Heart right ventricle (tissue), 16 donors: ENCODE measurements at regions of chr11 and their contacts with region 1.

Region 1: DNA sequence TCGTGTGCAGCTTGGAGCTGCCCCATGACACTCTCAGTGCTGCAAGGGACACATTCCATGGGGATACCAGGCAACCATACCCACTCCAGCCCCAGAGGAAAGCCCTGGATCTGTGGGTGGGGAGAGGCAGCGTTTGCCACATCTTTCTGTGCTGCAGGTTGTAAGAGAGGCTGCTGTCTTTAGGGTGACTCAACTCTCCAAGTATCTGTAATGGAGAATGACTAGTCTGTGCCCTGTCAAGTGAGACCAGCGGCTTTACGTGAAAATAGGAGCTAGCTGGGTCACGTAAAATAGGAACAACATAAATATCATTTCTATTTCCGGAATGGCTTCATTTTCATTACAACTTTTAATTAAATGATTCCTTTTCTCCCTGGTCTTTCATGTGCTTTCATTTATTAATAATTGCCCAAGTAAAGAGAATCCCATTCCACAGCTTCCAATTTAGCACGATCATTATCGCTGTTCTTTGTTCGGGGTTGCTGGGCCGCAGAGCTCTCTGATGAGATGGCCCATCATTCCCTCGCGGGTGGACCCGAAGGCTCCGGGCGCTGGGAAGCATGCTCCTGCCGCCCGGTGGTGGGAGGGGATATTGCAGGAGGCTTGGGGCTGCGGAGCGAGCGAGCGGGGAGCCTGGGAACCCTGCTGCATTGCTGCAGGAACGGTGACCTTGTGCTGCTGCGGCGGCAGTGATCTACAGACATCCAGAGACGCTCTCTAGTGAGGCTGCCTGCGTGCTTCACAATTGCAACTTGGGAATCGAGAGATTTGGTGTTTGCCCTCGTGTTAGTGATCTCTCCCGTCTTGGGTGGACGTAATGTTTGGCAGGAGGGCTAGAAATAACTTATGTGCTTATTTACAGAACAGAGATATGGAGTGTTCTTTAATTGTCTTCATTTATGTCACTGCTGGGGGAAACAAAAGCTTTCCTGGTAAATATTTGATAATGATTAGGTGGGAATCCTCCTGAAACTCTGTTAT is 10.6 kb downstream of the SLC6A5 start:
- DNase-seq: peak; percentile 64 to 78
- ATAC-seq: peak; percentile 88 to 96 (median 94)
- H3K4me3 ChIP-seq: peak overlapping the region in 2 of 10 donors; percentile 3 to 23
- H3K27ac ChIP-seq: no peak overlapping the region
- H3K4me1 ChIP-seq: peaks cover 0 to 8% (median 0%) of the 10 kb centered on the region in 9 donors
- H3K27me3 ChIP-seq: peaks cover 10 to 90% (median 78%) of the 10 kb centered on the region in 7 donors
- CTCF ChIP-seq: peak; percentile 70 to 98 (median 95)

Region 2: GRCh38 chr11:20387241-20388095 is 222.5 kb before region 1 on chr11 and contains the start of gene PRMT3:
- intact Hi-C with region 1: loop called in 6 of 10 experiments (anchors 2 to 10 kb)
- DNase-seq: peak; percentile 95 to 97
- ATAC-seq: peak; percentile 97 to 99 (median 98)
- H3K4me3 ChIP-seq: peak within 1 kb of the TSS; percentile 61 to 98 (median 79)
- H3K27ac ChIP-seq: peak within 1 kb of the TSS; percentile 85 to 98 (median 93)
- H3K4me1 ChIP-seq: peaks cover 0 to 24% (median 18%) of the 10 kb centered on the region in 9 donors
- H3K27me3 ChIP-seq: no peaks in the 10 kb centered on the region
- CTCF ChIP-seq: peak in 8 of 9 donors; percentile 4 to 99 (median 95)
- total RNA-seq, gene PRMT3: 9.2 to 16.3 (median 11.7) TPM

Region 3: GRCh38 chr11:20397281-20397680 is 212.7 kb before region 1 on chr11:
- intact Hi-C with region 1: loop called in 6 of 10 experiments (anchors 1 to 10 kb)
- DNase-seq: no peak
- ATAC-seq: peak in 1 of 8 donors; percentile 58
- H3K4me3 ChIP-seq: no peak overlapping the region
- H3K27ac ChIP-seq: no peak overlapping the region
- H3K4me1 ChIP-seq: no peaks in the 10 kb centered on the region
- H3K27me3 ChIP-seq: no peaks in the 10 kb centered on the region
- CTCF ChIP-seq: peak in 8 of 9 donors; percentile 14 to 60 (median 52)

Region 4: DNA sequence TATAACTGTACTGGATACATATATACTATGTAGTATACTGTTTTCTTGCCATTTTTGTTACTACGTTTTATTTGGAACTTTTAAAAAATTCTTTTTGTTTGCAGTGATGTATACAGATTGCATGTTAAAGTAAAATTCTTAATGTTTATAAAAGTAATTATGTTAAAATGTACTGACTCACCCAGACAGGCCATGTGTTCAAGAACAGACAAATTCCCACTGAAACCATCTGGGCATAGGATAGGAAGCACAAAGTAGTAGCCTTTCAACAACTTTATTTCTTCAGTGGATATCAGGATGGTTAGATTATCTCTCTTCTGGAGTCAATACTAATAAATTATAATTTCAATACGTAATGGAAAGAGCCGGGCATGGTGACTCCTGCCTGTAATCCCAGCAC is 202.7 kb before region 1 on chr11:
- intact Hi-C with region 1: loop called in 1 of 10 experiments (anchors 10 kb)
- DNase-seq: no peak
- ATAC-seq: no peak
- H3K4me3 ChIP-seq: no peak overlapping the region
- H3K27ac ChIP-seq: no peak overlapping the region
- H3K4me1 ChIP-seq: no peaks in the 10 kb centered on the region
- H3K27me3 ChIP-seq: no peaks in the 10 kb centered on the region
- CTCF ChIP-seq: no peak

Region 5: DNA sequence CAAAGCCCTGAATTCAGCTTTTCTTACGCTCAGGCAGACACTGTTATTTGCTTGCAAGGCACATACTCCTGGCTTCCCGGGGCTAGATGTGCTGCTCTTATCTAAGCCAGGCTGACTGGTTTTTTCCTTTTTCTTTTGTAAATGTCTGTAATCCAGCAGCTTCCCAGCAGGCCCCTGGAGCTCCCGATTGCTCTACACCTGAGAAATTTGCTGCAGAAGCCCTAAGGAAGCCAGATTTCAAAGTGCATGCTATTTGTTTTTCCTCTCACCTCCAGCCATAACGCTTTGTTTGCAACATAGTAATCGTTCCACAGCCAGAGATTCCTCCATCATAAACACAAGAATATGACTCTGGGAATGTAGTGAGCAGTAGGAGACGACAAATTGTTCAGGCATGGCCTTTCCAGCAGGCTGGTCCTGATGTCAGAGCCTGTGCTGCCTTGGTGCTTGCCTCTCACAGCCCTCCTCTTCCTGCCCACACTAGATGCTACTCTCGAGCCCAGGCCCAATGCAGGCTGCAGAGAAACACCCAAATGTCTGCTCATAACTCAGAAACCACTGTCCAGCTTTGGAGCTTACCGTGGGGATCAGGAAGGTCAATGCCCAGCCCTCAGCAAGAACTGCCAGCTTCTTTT is 65.3 kb before region 1 on chr11:
- intact Hi-C with region 1: no loop called
- DNase-seq: no peak
- ATAC-seq: no peak
- H3K4me3 ChIP-seq: no peak overlapping the region
- H3K27ac ChIP-seq: no peak overlapping the region
- H3K4me1 ChIP-seq: no peaks in the 10 kb centered on the region
- H3K27me3 ChIP-seq: peaks cover 0 to 5% (median 0%) of the 10 kb centered on the region in 7 donors
- CTCF ChIP-seq: no peak

Region 6: GRCh38 chr11:20563866-20564265 is 46.2 kb before region 1 on chr11:
- intact Hi-C with region 1: no loop called
- DNase-seq: no peak
- ATAC-seq: no peak
- H3K4me3 ChIP-seq: no peak overlapping the region
- H3K27ac ChIP-seq: no peak overlapping the region
- H3K4me1 ChIP-seq: peaks cover 0 to 21% (median 4%) of the 10 kb centered on the region in 9 donors
- H3K27me3 ChIP-seq: peaks cover 0 to 4% (median 0%) of the 10 kb centered on the region in 7 donors
- CTCF ChIP-seq: no peak